Heart left ventricle (tissue), 16 donors: ENCODE measurements at regions of chr14 and their contacts with region 1.

Region 1: DNA sequence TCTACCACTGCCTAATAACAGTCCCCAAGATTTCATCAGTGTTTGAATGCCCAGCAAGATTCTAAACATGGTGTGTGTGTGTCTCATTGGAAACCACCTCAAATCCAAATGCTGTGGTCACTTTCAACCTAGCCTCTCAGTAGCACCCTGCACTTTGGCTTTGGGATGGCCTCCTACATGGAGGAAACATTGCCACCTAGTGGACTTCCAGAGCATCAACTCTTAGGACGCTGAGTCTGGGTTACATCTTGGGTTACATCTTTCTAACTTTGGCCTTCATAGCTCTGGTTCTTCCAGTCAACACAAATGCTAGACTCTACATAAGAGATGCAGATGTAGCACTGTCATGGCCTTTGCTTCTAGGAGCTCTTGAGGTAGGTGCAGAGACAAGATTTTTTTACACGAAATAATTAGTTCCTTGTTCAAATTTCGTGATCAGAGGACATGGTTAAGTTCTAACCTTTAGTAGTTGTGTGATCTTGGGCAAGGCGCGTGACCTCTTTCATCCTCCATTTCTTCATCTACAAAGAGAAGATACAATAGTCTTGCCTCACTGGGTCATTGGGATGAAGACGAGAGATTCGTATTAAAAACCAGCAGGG is 113.5 kb upstream of the VASH1 start:
- DNase-seq: peak in 2 of 5 donors; percentile 20 to 31
- ATAC-seq: peak in 3 of 4 donors; percentile 55 to 65 (median 65)
- H3K4me3 ChIP-seq: no peak overlapping the region
- H3K27ac ChIP-seq: no peak overlapping the region
- H3K4me1 ChIP-seq: no peaks in the 10 kb centered on the region
- H3K27me3 ChIP-seq: no peaks in the 10 kb centered on the region
- CTCF ChIP-seq: peak; percentile 68 to 88 (median 80)
- POLR2A ChIP-seq: no peak

Region 2: DNA sequence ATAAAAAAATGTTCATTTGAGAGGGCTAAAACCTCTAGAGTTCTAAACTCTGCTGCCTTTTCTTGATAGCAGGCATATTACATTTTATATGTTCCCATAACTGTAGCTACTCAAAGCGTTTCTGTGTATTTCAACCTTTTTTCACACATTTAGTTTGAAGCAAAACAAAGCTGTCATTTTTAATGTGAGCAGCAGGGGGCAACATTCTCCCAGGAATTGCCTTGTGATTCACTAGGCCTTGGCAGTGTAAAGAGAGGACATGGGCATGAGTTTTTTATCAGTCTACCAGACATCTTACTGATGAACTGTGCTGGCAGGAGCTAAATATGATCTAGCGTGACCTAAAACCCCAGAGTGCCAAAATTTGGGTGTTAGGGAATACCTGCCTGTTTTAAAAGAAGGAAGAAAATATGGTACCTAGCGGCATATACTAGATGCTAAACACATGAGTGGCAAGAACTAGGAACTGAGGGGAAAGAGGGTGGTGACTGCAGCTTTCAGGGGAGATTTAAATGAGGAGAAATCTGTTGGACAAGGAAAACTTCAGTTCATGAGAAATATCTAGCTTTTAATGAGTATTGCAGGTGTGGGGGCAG is 596.9 kb before region 1 on chr14:
- intact Hi-C with region 1: loop called (anchors 2 to 5 kb)
- DNase-seq: peak in 2 of 5 donors; percentile 44 to 50
- ATAC-seq: peak in 3 of 4 donors; percentile 73 to 78 (median 75)
- H3K4me3 ChIP-seq: no peak overlapping the region
- H3K27ac ChIP-seq: no peak overlapping the region
- H3K4me1 ChIP-seq: peaks cover 0 to 3% (median 0%) of the 10 kb centered on the region in 12 donors
- H3K27me3 ChIP-seq: no peaks in the 10 kb centered on the region
- CTCF ChIP-seq: peak; percentile 57 to 85 (median 76)
- POLR2A ChIP-seq: no peak

Region 3: GRCh38 chr14:76456200-76456599 is 191.6 kb before region 1 on chr14:
- intact Hi-C with region 1: loop called (anchors 1 to 5 kb)
- DNase-seq: peak in 2 of 5 donors; percentile 28 to 31
- ATAC-seq: peak in 2 of 4 donors; percentile 51 to 60
- H3K4me3 ChIP-seq: no peak overlapping the region
- H3K27ac ChIP-seq: no peak overlapping the region
- H3K4me1 ChIP-seq: no peaks in the 10 kb centered on the region
- H3K27me3 ChIP-seq: no peaks in the 10 kb centered on the region
- CTCF ChIP-seq: peak; percentile 30 to 64 (median 52)
- POLR2A ChIP-seq: no peak

Region 4: GRCh38 chr14:76672123-76672522 is 24.3 kb after region 1 on chr14:
- intact Hi-C with region 1: no loop called
- DNase-seq: no peak
- ATAC-seq: no peak
- H3K4me3 ChIP-seq: no peak overlapping the region
- H3K27ac ChIP-seq: no peak overlapping the region
- H3K4me1 ChIP-seq: no peaks in the 10 kb centered on the region
- H3K27me3 ChIP-seq: no peaks in the 10 kb centered on the region
- CTCF ChIP-seq: no peak
- POLR2A ChIP-seq: no peak

Region 5: GRCh38 chr14:77565289-77565993 is 917.6 kb after region 1 on chr14:
- intact Hi-C with region 1: no loop called
- DNase-seq: no peak
- ATAC-seq: peak in 3 of 4 donors; percentile 42 to 74 (median 52)
- H3K4me3 ChIP-seq: peak overlapping the region in 1 of 12 donors; percentile 31
- H3K27ac ChIP-seq: peak overlapping the region in 1 of 12 donors; percentile 88
- H3K4me1 ChIP-seq: peaks cover 0 to 22% (median 0%) of the 10 kb centered on the region in 12 donors
- H3K27me3 ChIP-seq: no peaks in the 10 kb centered on the region
- CTCF ChIP-seq: no peak
- POLR2A ChIP-seq: no peak